ENCODE measurements at regions of chr9 and their contacts with region 1.

Region 1: DNA sequence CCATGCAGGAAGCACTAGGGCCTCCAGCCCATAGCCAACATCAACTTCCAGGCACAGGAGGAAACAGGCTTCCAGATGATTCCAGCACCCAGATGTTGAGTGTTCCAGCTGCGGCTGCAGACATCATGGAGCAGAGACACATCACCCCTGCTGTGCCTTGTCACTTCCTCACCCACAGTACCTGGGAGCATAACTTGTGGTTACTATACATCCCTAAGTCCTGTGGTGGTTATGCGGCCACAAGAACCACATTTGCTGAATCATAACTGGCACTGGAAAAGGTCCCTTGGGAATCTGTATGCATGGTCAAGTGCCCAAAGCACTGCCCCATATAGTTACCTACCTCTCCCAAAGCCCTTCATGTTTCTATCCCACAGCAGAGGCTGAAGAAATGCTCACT is 56.6 kb downstream of the WHRN start:
- DNase-seq: peak in 1 of 2 experiments; percentile 8
- H3K4me3 ChIP-seq: no peak overlapping the region
- H3K27ac ChIP-seq: no peak overlapping the region
- H3K4me1 ChIP-seq: peaks cover 9% of the 10 kb centered on the region; the same call in 1 of the 2 replicates
- H3K27me3 ChIP-seq: no peaks in the 10 kb centered on the region
- CTCF ChIP-seq: no peak

Region 2: GRCh38 chr9:114224247-114224610 is 224.5 kb before region 1 on chr9:
- CTCF ChIA-PET with region 1: no interaction called
- POLR2A ChIA-PET with region 1: no interaction called
- intact Hi-C with region 1: no loop called
- DNase-seq: no peak
- H3K4me3 ChIP-seq: no peak overlapping the region
- H3K27ac ChIP-seq: no peak overlapping the region
- H3K4me1 ChIP-seq: peaks cover 4% of the 10 kb centered on the region
- H3K27me3 ChIP-seq: no peaks in the 10 kb centered on the region
- CTCF ChIP-seq: no peak

Region 3: DNA sequence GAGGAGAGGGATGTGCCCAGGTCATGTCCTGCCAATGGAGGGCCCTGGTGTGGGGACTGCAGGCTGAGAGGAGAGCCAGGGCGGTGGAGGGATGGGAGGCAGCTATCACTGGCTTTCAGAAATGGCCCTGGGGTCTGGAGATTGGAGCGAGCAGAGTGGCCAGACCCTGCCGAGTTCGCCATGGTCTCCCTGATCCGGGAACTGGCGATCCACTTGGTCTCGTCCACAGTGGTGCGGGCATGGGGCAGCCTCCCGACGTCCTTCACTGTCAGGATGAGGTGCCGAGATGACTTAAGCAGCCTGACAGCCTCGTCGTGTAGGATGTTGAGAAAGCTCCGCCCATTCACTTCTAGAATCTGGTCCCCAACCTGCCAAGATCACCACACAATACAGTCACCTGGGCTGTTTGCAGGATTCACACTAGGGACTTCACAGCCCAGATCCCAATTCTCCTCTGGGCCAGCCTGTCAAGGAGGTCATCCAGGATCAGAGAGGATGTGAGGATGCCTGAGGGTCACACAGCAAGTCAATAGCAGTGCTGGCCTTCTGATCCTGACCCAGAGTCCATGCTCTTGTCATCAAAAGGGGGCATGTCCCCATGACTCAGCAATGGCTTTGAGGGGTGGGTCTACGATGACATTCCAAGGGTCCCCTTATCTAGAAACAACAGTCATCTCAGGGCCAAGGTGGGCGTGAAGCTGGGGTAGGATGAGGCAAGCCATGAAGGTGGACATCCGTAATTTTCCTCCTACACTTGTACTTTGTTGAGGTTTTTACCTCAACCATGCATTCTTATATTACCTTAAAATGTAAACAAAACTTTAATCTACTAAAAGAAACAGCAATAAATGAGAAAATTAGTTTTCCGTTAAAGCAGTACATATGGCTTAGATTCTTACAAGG is 22.4 kb before region 1 on chr9:
- CTCF ChIA-PET with region 1: no interaction called
- POLR2A ChIA-PET with region 1: no interaction called
- intact Hi-C with region 1: loop called (anchors 2 kb)
- DNase-seq: no peak
- H3K4me3 ChIP-seq: no peak overlapping the region
- H3K27ac ChIP-seq: no peak overlapping the region
- H3K4me1 ChIP-seq: no peaks in the 10 kb centered on the region
- H3K27me3 ChIP-seq: no peaks in the 10 kb centered on the region
- CTCF ChIP-seq: no peak

Region 4: GRCh38 chr9:114505187-114506081 is 56.7 kb after region 1 on chr9 and contains the start of gene WHRN:
- CTCF ChIA-PET with region 1: no interaction called
- POLR2A ChIA-PET with region 1: no interaction called
- intact Hi-C with region 1: no loop called
- DNase-seq: peak; percentile 79 to 96
- H3K4me3 ChIP-seq: peak within 1 kb of the TSS; percentile 82
- H3K27ac ChIP-seq: no peak within 1 kb of the TSS
- H3K4me1 ChIP-seq: peaks cover 35% of the 10 kb centered on the region
- H3K27me3 ChIP-seq: peaks cover 9% of the 10 kb centered on the region; the same call in 1 of the 2 replicates
- CTCF ChIP-seq: no peak
- total RNA-seq, gene WHRN: 19.8 and 21.9 TPM in 2 replicates

Measured in PC-9 (cell line).